BJ (cell line): ENCODE measurements at regions of chr10 and their contacts with region 1.

Region 1: GRCh38 chr10:7687228-7687907 is 15.7 kb upstream of the ITIH2 start:
- DNase-seq: peak; percentile 42
- H3K4me3 ChIP-seq: no peak overlapping the region
- H3K27me3 ChIP-seq: no peaks in the 10 kb centered on the region
- CTCF ChIP-seq: peak; percentile 89

Region 2: GRCh38 chr10:7525314-7526016 is 161.9 kb before region 1 on chr10:
- CTCF ChIA-PET with region 1: interaction called, 164 read pairs
- POLR2A ChIA-PET with region 1: interaction called, 6 read pairs
- DNase-seq: peak; percentile 13
- H3K4me3 ChIP-seq: no peak overlapping the region
- H3K27me3 ChIP-seq: no peaks in the 10 kb centered on the region
- CTCF ChIP-seq: peak; percentile 74

Region 3: DNA sequence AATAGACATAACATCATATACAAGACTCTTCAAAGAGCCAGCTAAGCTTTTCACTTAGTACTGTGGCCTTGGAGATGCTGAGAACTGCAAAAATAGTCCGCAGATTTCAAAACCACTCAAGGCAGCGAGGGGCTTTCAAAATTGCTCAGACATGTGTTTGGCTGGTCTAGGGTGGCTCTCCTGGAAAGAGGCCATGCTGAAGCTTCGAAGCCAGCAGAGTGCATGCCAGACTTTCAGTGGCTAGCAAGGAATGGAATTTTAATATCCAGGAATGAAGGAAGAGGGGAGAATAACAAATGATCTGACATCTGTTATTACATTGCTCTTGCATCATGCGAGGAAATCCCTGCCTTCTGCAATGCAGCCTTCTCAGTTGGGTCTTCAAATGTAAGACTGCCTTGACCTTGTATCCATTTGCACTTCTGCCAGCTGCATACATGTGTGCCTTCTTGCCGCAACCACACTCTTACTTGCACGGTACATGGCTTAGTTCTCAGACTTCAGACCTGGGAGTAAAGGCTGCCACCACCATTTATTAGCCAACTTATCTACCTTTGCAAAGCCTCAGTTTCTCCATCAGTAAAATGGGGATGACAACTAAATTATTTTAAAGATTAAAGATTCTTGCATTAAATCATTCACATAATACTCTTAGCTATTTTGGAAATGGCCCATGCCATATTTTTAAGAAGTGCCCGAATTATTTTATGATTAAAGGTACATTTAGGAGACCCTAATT is 76.5 kb before region 1 on chr10:
- CTCF ChIA-PET with region 1: interaction called, 18 read pairs
- POLR2A ChIA-PET with region 1: no interaction called
- DNase-seq: peak; percentile 96
- H3K4me3 ChIP-seq: no peak overlapping the region
- H3K27me3 ChIP-seq: no peaks in the 10 kb centered on the region
- CTCF ChIP-seq: no peak

Region 4: DNA sequence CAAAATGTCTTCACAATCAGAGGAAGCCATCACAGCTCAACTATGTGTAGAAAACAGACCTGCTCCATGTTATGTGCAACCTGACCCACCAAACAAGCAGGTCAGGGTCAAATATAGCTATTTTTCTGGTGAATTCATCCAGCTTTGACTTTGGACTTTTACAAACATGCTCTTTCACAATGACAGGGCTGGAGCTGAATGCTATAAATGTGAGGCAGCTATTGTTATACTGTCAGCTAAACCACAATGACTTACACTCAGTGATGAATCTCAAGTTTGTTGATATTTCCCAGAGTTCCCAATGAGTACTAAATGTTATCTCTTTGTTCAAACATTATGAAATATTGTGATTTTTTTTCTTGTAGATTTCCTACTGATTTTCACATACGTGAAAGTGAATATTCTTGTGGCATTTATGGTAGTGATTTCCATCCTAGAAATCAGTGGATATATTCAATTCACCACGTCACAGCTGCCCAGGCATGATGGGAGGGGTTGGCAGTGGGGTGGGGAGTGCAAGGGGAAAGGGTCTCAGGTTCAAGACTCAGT is 13.3 kb after region 1 on chr10:
- CTCF ChIA-PET with region 1: interaction called, 17 read pairs
- POLR2A ChIA-PET with region 1: no interaction called
- DNase-seq: no peak
- H3K4me3 ChIP-seq: no peak overlapping the region
- H3K27me3 ChIP-seq: no peaks in the 10 kb centered on the region
- CTCF ChIP-seq: no peak